Mammary epithelial cell (primary cell): ENCODE measurements at regions of chr3 and their contacts with region 1.

Region 1: GRCh38 chr3:10518506-10519150 is 13.2 kb upstream of the ATP2B2 start:
- DNase-seq: no peak
- H3K4me3 ChIP-seq: no peak overlapping the region
- H3K27ac ChIP-seq: no peak overlapping the region
- H3K4me1 ChIP-seq: no peaks in the 10 kb centered on the region
- H3K27me3 ChIP-seq: peaks cover 6% of the 10 kb centered on the region
- CTCF ChIP-seq: no peak

Region 2: DNA sequence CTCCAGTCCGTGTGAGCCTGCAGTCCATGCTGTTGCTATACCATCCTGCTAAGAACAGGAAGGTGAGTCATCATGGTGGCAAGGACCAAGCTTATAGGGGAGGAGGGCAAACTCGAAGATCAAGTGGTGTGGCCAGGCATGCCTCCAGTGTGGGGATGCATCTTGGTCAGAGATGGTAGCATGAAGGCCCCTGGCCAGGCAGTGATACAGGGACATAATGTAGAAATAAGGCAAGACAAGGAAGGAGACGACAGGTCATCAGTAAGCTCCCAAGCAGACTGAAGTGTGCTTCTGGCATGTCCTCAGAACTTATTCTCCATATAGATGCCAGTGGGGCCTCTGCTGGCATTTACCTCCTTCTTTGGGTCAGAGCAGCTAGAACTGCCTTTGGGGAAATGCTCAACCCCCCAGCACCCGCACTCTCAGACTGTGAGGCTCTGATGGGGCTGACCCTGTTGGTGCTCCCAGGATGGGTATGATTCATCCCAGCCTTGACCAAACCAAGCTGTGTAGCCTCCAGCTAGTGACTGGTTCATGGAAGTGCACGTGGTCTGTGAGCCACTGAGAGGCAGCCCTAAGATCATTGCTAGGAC is 39.2 kb after region 1 on chr3:
- CTCF ChIA-PET with region 1: no interaction called
- dilution Hi-C with region 1: no loop called
- in situ Hi-C with region 1: no loop called
- intact Hi-C with region 1: no loop called
- DNase-seq: peak; percentile 67
- H3K4me3 ChIP-seq: no peak overlapping the region
- H3K27ac ChIP-seq: no peak overlapping the region
- H3K4me1 ChIP-seq: peaks cover 8% of the 10 kb centered on the region
- H3K27me3 ChIP-seq: no peaks in the 10 kb centered on the region
- CTCF ChIP-seq: no peak

Region 3: DNA sequence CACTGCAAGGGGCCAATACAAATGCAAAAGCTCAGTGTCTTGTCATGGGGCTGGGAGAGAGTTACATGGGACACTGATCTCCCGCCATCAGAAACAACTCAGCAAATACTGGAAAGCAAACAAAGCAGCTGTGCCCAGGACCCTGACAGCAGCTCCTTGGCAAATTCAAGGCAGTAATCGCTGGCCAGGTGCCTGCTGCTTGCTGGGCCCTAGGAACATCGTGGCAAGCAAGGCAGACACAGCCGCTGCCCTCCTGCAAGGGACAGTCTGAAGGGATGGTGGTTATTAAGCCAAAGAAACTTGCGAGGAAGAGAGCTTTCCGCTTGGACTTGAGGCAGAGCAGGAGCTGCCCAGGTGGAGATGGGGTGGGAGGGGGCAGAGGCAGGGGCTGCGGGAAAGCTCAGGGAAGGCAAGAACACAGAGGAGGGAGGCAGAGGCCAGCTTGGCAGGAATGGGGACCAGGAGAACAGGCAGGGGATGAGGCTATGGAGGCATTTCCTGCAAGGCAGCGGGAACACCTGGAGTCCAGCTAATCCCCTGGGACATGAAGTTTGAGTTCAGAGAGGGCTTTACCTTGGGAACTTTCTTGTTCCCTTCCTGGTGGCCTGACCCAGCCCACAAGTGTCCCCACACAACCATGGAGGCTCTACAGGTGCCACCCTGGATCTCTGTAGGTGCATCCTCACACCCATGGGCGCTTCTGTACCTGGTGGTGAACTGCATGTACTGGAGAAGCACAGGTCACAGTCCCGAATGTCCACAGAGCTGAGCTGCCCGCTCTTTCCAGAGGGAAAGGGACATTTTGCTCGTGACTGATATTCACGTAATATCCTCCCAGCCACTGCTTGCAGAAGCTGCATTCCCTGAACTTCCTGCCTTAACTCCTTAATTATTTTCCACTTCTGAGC is 65.4 kb after region 1 on chr3:
- CTCF ChIA-PET with region 1: no interaction called
- dilution Hi-C with region 1: no loop called
- in situ Hi-C with region 1: no loop called
- intact Hi-C with region 1: no loop called
- DNase-seq: no peak
- H3K4me3 ChIP-seq: no peak overlapping the region
- H3K27ac ChIP-seq: no peak overlapping the region
- H3K4me1 ChIP-seq: no peaks in the 10 kb centered on the region
- H3K27me3 ChIP-seq: no peaks in the 10 kb centered on the region
- CTCF ChIP-seq: no peak

Region 4: DNA sequence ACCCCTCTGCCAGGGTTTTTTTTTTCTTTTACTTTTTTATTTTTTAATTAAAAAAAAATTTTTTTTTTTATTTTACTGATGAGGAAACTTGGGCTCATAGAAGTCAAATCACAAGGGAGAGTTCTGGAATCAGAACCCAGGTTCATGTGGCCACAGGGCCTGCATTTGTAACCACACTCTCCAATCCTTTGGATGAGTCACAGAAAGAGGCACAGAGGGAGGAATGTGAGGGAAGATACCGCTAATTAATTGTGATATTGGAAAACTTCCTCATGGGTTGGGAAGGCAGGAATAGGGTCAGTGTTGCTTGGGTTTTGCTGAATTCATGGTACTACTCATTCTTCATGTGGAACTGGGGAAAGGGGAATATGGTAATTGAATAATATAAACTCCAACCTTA is 164.5 kb after region 1 on chr3:
- CTCF ChIA-PET with region 1: no interaction called
- dilution Hi-C with region 1: no loop called
- in situ Hi-C with region 1: no loop called
- intact Hi-C with region 1: loop called (anchors 10 kb)
- DNase-seq: peak; percentile 3
- H3K4me3 ChIP-seq: no peak overlapping the region
- H3K27ac ChIP-seq: no peak overlapping the region
- H3K4me1 ChIP-seq: no peaks in the 10 kb centered on the region
- H3K27me3 ChIP-seq: no peaks in the 10 kb centered on the region
- CTCF ChIP-seq: no peak